Naive thymus-derived CD8-positive, alpha-beta T cell (primary cell): ENCODE measurements at regions of chr6 and their contacts with region 1.

Region 1: DNA sequence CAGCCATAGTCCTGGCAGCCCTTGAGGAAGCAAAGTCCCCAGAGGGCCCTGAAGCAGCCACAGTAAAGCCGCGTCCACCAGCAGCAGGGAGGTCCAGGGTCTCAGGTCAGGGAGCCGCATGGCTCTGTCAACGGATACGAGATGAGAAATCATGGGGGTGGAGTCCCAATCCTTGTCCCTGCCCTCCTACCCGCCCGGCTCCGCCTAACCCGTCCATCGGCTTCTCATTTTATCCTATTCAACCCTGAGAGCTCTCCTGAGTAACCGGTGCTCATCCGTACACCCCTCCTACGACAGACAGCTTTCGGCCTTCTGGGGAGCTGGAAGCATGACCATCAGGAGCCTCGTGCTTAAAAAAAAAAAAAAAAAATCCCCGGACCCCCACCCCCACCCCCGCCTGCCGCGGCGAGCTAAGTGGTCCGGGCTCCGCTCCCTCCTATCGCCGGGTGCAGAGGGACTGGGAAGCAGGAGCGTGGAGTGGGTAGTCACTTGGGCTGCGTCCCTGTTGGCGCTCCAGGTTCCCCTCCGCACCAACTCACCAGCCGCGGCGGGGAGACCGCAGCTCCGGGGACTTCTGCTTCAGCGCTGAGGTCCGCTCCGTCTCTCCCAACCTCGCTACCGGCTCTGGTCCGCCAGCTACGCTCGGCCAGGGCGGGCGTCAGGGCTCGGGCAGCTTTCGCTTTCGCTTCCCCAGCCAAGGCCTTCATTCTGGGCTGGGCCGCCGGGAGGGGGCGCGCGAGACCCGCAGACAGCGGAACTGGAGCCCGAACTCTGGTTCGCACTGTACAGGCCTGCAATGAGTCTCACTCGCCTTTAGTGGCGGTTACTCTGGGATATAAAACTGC is at the start of gene TAP2:
- DNase-seq: peak; percentile 92 to 99 (median 97)
- ATAC-seq: peak; percentile 87 to 93
- H3K4me3 Mint-ChIP-seq: peak within 1 kb of the TSS; percentile 75 to 99 (median 94)
- H3K27ac Mint-ChIP-seq: peak within 1 kb of the TSS; percentile 84 to 100 (median 98)
- H3K4me1 Mint-ChIP-seq: peaks cover 46 to 92% (median 89%) of the 10 kb centered on the region in 4 donors
- H3K27me3 Mint-ChIP-seq: no peaks in the 10 kb centered on the region
- polyA plus RNA-seq, gene TAP2: 24.2 to 36.6 (median 25.3) TPM

Region 2: DNA sequence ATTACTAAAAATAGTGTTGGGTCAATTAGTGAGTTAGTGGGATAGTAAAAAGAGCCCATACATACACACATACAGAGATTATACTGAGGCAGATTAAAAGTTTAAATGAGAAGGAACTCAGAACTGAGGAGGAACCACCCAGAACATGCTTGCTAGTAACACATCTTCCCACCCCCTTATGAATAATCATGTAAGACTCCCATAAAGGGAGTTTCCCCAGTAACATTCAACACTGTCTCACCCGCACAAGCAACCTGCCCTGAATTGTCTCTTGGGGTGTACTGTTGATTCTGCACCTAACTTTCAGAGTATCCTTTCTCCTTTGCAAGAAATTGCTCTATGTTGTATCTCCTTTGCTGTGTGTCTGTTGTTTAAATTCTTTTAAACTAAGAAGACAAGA is 63.9 kb before region 1 on chr6:
- POLR2A ChIA-PET with region 1: no interaction called
- DNase-seq: no peak
- ATAC-seq: no peak
- H3K4me3 Mint-ChIP-seq: no peak overlapping the region
- H3K27ac Mint-ChIP-seq: no peak overlapping the region
- H3K4me1 Mint-ChIP-seq: peaks cover 0 to 3% (median 0%) of the 10 kb centered on the region in 4 donors
- H3K27me3 Mint-ChIP-seq: peaks cover 16 to 31% (median 25%) of the 10 kb centered on the region in 5 donors

Region 3: DNA sequence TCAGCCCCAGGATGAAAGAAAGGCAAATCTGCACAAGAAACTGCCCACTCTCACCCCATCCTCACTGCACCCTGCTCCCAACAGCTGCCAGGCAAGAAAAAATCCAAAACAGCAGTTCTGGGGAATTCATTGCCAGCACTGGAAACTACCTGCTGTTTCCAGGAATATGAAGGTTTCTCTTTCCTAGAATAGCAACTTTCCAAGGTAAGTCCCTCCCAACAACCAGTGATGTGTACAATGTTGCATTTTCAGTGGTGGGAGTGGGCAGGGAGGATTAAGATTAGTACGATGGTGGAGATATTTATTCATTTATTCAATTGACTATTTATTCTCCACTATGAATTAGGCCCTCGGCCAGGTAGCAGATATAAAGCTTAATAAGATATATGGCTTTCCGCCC is 11.3 kb before region 1 on chr6:
- POLR2A ChIA-PET with region 1: interaction called, 10 read pairs
- DNase-seq: no peak
- ATAC-seq: no peak
- H3K4me3 Mint-ChIP-seq: no peak overlapping the region
- H3K27ac Mint-ChIP-seq: peak overlapping the region in 6 of 10 donors; percentile 25 to 72 (median 40)
- H3K4me1 Mint-ChIP-seq: peaks cover 4 to 22% (median 12%) of the 10 kb centered on the region in 4 donors
- H3K27me3 Mint-ChIP-seq: no peaks in the 10 kb centered on the region

Region 4: DNA sequence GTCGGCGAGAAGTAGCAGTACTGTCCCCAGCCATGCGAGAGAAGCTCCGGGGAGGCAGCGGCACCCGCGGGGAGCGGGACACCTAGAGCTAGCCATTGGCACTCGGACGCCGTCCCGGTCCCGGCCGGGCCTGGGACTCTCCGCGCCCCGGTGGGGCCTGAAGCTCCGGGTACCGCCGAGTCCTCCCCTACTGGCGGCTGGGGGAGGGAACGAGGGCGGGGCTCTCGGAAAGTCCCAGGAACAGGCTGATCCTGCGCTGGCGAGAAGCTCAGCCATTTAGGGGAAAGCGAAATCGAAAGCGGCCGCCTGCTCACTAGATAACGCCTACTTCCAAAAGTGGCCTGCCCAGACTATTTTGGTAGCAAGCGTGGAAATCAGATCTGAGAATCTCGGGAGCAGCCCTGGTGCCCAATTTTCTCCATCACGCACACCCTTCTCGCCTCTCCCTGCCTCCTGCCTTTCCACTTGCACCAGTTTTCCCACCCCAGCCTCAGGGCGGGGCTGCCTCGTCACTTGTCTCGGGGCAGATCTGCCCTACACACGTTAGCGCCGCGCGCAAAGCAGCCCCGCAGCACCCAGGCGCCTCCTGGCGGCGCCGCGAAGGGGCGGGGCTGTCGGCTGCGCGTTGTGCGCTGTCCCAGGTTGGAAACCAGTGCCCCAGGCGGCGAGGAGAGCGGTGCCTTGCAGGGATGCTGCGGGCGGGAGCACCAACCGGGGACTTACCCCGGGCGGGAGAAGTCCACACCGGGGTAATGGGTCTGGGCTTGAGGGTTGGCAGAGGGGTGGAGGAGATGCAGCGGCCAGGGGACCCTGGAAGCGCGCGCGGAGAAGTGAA is 15.4 kb after region 1 on chr6 and contains the starts of genes PSMB9 and TAP1:
- POLR2A ChIA-PET with region 1: interaction called, 743 read pairs
- DNase-seq: peak; percentile 88 to 99 (median 92)
- ATAC-seq: peak; percentile 82 to 83
- H3K4me3 Mint-ChIP-seq: peak within 1 kb of the TSS; percentile 90 to 100 (median 98)
- H3K27ac Mint-ChIP-seq: peak within 1 kb of the TSS; percentile 98 to 100 (median 100)
- H3K4me1 Mint-ChIP-seq: peaks cover 46 to 76% (median 72%) of the 10 kb centered on the region in 4 donors
- H3K27me3 Mint-ChIP-seq: no peaks in the 10 kb centered on the region
- polyA plus RNA-seq, gene PSMB9: 402 to 432 (median 424) TPM
- polyA plus RNA-seq, gene TAP1: 197 to 283 (median 230) TPM

Region 5: DNA sequence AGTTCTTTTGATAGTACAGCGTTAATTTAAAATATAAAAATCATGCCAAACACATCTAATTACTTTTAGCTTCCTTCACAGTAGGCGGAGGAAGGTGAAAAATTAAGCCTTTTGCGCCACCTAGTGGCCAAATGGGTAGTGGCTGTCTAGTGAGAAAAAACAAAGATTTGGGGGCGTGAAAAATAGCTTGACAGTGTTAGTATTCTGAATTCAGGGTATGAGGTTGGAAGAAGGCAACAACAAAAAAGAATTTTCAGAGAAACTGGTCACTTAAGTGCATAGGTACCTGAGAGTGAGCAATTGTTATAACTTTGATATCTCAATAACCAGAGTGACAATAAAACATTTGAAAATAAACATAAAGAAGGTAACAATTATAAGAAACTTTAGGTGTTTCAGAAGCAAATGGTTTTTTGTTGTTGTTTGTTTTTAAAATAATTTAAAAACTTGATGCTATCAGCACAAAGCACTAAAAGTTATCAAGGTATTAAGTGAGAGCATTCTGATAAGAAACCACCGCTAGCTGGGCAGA is 30.0 kb after region 1 on chr6:
- POLR2A ChIA-PET with region 1: interaction called, 172 read pairs
- DNase-seq: peak; percentile 75 to 92 (median 84)
- ATAC-seq: peak; percentile 72 to 78
- H3K4me3 Mint-ChIP-seq: peak overlapping the region in 2 of 10 donors; percentile 2
- H3K27ac Mint-ChIP-seq: peak overlapping the region in 5 of 10 donors; percentile 9 to 93 (median 87)
- H3K4me1 Mint-ChIP-seq: peaks cover 9 to 37% (median 31%) of the 10 kb centered on the region in 4 donors
- H3K27me3 Mint-ChIP-seq: peaks cover 0 to 1% (median 0%) of the 10 kb centered on the region in 5 donors

Region 6: GRCh38 chr6:32940656-32941213 is 102.4 kb after region 1 on chr6 and contains the start of gene HLA-DMB:
- POLR2A ChIA-PET with region 1: interaction called, 11 read pairs
- DNase-seq: peak in 9 of 10 donors; percentile 42 to 80 (median 63)
- ATAC-seq: peak; percentile 83 to 85
- H3K4me3 Mint-ChIP-seq: peak within 1 kb of the TSS; percentile 84 to 97 (median 94)
- H3K27ac Mint-ChIP-seq: peak within 1 kb of the TSS; percentile 88 to 98 (median 97)
- H3K4me1 Mint-ChIP-seq: peaks cover 43 to 92% (median 64%) of the 10 kb centered on the region in 4 donors
- H3K27me3 Mint-ChIP-seq: no peaks in the 10 kb centered on the region
- polyA plus RNA-seq, gene HLA-DMB: 10.8 to 22.5 (median 16.8) TPM